Endothelial cell of umbilical vein (primary cell): ENCODE measurements at regions of chr9 and their contacts with region 1.

Region 1: GRCh38 chr9:16515879-16516301 is 354.6 kb downstream of the BNC2 start:
- DNase-seq: peak; percentile 88
- H3K4me3 ChIP-seq: no peak overlapping the region
- H3K27ac ChIP-seq: peak overlapping the region; percentile 55
- H3K4me1 ChIP-seq: peaks cover 28% of the 10 kb centered on the region
- H3K27me3 ChIP-seq: no peaks in the 10 kb centered on the region
- CTCF ChIP-seq: no peak
- POLR2A ChIP-seq: no peak

Region 2: GRCh38 chr9:16321461-16322119 is 194.3 kb before region 1 on chr9:
- CTCF ChIA-PET with region 1: no interaction called
- POLR2A ChIA-PET with region 1: no interaction called
- dilution Hi-C with region 1: no loop called
- intact Hi-C with region 1: no loop called
- DNase-seq: peak; percentile 21
- H3K4me3 ChIP-seq: no peak overlapping the region
- H3K27ac ChIP-seq: no peak overlapping the region
- H3K4me1 ChIP-seq: peaks cover 2% of the 10 kb centered on the region
- H3K27me3 ChIP-seq: no peaks in the 10 kb centered on the region
- CTCF ChIP-seq: no peak
- POLR2A ChIP-seq: no peak

Region 3: DNA sequence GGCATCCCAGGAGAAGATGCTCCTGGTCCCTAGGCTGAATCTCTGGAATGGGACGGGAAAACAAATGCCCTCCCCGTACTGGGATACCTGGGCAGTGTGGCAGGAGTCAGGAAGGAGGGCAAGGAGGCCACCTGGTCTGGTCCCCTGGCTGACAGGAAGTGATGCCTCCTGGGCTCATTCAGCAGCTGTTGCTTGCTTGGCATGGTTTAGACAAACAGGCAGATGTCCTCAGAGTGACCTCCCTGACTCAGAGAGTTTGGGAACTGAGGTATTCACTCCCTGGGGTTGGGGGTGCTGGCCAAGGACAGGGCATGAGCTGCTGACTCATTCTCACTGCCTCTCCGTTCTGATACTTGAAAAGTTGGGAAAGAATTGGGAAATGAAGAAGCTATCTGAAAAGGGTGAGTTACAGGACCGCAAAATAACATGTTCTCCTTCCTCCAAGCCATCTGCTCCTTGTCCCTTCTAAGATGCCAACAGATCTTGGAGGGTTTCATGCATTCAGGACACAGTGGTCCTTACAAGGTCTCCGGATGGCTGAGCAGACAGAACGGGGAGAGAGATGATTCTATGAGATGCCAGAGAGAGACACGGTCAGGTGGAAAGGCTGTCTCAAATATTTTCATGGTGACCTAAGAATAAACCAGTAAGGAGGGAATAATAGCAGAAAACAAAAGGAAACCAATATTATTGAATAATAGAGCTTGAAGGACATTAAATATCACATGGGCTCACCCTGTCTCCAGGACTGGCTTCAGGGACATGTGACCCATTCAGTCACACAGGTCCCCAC is 179.9 kb before region 1 on chr9:
- CTCF ChIA-PET with region 1: no interaction called
- POLR2A ChIA-PET with region 1: no interaction called
- dilution Hi-C with region 1: no loop called
- intact Hi-C with region 1: loop called (anchors 5 kb)
- DNase-seq: peak; percentile 82
- H3K4me3 ChIP-seq: no peak overlapping the region
- H3K27ac ChIP-seq: peak overlapping the region; percentile 81
- H3K4me1 ChIP-seq: peaks cover 25% of the 10 kb centered on the region
- H3K27me3 ChIP-seq: no peaks in the 10 kb centered on the region
- CTCF ChIP-seq: no peak
- POLR2A ChIP-seq: no peak

Region 4: GRCh38 chr9:16530669-16531642 is 15.1 kb after region 1 on chr9:
- CTCF ChIA-PET with region 1: interaction called, 3 read pairs
- POLR2A ChIA-PET with region 1: interaction called, 3 read pairs
- dilution Hi-C with region 1: no loop called
- intact Hi-C with region 1: loop called (anchors 1 kb)
- DNase-seq: no peak
- H3K4me3 ChIP-seq: no peak overlapping the region
- H3K27ac ChIP-seq: no peak overlapping the region
- H3K4me1 ChIP-seq: peaks cover 34% of the 10 kb centered on the region
- H3K27me3 ChIP-seq: no peaks in the 10 kb centered on the region
- CTCF ChIP-seq: no peak
- POLR2A ChIP-seq: no peak

Region 5: DNA sequence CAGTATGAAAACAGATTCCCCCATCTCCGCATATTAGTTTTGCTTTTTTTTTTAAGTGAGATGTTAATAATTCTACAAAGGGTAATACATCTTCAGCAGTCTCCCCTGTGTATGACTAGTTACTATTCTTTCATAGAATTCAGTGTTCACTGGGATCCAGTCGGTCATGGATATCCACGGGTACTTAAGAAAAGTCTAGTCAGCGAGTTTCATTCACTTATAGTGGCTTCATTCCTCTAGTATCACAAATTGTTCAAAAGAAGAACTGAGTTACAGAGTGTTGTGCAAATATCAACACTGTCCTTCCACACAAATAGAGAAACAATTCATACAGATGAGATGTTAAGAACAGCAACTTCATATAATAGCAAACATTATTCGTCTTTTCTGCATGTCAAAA is 318.9 kb after region 1 on chr9:
- CTCF ChIA-PET with region 1: no interaction called
- POLR2A ChIA-PET with region 1: no interaction called
- dilution Hi-C with region 1: no loop called
- intact Hi-C with region 1: no loop called
- DNase-seq: no peak
- H3K4me3 ChIP-seq: no peak overlapping the region
- H3K27ac ChIP-seq: no peak overlapping the region
- H3K4me1 ChIP-seq: no peaks in the 10 kb centered on the region
- H3K27me3 ChIP-seq: no peaks in the 10 kb centered on the region
- CTCF ChIP-seq: no peak
- POLR2A ChIP-seq: no peak

Region 6: GRCh38 chr9:16871356-16872151 is 355.7 kb after region 1 on chr9:
- CTCF ChIA-PET with region 1: no interaction called
- POLR2A ChIA-PET with region 1: no interaction called
- dilution Hi-C with region 1: no loop called
- intact Hi-C with region 1: loop called (anchors 10 kb)
- DNase-seq: peak; percentile 59
- H3K4me3 ChIP-seq: peak overlapping the region; percentile 81 to 98 (median 88)
- H3K27ac ChIP-seq: peak overlapping the region; percentile 17
- H3K4me1 ChIP-seq: peaks cover 14% of the 10 kb centered on the region
- H3K27me3 ChIP-seq: peaks cover 2 to 3% of the 10 kb centered on the region in 2 experiments
- CTCF ChIP-seq: no peak
- POLR2A ChIP-seq: no peak